Cardiac septum (tissue), 1 donor: ENCODE measurements at regions of chr6 and their contacts with region 1.

Region 1: GRCh38 chr6:162187168-162187935 is 540.2 kb downstream of the PRKN start:
- DNase-seq: no peak

Region 2: GRCh38 chr6:162230147-162230752 is 42.9 kb after region 1 on chr6:
- intact Hi-C with region 1: loop called (anchors 5 kb)
- DNase-seq: no peak

Region 3: GRCh38 chr6:162468326-162468725 is 281.0 kb after region 1 on chr6:
- intact Hi-C with region 1: loop called (anchors 2 kb)
- DNase-seq: no peak

Region 4: DNA sequence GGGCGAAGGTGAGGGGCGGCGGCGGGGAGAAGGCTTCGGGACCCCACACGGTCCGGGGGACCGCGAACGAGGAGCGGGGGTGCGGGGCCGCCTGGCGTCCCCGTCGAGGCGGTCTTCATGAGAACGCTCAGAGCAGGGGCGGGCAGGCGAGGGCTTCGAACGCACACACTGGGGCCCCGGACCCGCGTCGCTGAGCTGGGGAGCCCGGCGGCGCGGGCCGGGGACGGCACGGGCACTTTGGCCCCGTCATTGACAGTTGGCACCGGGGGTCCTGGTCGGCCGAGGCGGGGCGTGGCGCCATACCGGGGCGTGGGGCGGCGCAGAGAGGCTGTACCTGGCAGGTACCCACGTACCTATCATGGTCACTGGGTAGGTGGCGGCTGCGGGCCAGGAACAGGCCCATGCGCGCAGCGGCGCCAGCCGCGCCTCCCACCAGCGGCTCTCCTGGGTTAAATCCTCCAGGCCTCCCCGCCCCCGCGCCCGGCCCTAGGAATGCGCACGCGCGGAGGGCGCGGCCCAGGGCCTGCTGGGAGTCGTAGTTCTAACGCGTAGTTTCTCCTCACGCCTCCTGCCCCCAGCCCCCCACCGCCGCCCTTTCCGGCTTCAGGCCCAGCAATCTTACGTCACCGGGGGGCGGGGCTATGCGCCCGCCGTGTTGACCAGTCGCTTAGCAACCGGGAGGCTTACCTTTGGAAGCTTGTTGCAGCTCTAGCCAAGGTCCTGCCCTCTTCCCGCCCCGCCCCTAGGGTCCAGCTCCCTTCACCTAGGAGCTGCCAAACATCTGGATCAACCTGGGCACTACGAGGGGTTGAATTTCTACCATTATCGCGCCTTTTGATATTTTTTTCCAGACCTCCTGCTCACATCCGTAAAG is 540.2 kb after region 1 on chr6 and contains the starts of genes PACRG and PRKN:
- intact Hi-C with region 1: loop called (anchors 5 kb)
- DNase-seq: peak; percentile 98
- total RNA-seq, gene PACRG: 14.1 TPM
- total RNA-seq, gene PRKN: 23.2 TPM